ENCODE measurements at regions of chr3 and their contacts with region 1.

Region 1: DNA sequence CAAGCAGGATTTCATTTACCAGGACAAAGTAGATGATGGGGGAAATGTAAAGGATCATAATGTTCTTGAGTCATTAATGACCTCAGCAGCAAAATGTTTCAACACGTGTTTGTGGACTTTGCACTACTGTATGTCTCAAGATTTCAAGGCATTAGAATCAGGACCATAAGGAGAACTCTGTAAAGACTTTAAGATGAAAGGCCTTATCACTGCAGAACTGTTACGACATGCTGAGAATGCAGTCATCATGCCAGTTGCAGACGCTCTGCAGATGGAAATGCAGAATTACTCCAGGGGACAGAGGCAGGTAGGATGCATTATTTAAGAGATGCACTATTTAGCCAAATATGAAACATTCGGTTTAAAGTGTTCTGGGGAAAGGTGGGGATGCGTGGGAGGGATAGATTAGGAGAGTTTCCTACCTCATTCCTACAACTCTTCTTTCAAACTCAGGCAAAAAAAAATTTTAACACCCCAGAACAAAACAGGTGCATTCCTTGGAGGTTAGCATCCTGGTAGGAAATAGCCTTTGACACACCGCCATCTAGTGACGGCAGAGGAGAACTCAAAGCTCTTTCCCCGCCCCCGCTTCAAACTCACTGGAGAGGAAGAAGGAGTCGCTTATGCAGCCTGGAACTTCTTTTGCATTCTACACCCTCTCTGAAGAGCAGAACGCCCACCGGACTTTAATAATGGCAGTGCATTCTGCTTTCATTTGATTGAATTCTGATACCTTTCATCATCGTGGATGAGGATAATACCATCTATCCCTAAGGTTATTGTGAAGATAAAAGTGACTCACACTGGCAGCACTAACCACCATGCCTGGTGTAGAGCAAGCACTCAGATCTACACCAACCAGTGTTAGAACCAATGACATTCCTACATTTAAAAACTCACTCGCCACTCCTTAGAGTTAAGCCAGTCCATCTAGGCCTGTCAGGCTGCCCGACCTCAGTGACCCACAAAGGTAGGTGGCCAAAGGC is 43.1 kb upstream of the TOPAZ1 start:
- DNase-seq: peak; percentile 83
- ATAC-seq: peak; percentile 77
- H3K4me3 Mint-ChIP-seq: no peak overlapping the region
- H3K27ac Mint-ChIP-seq: no peak overlapping the region
- H3K4me1 Mint-ChIP-seq: no peaks in the 10 kb centered on the region
- H3K27me3 Mint-ChIP-seq: peaks cover 15% of the 10 kb centered on the region
- CTCF ChIP-seq: peak; percentile 81

Region 2: GRCh38 chr3:43769471-43770425 is 428.8 kb before region 1 on chr3:
- CTCF ChIA-PET with region 1: interaction called, 13 read pairs
- POLR2A ChIA-PET with region 1: no interaction called
- intact Hi-C with region 1: loop called (anchors 5 kb)
- DNase-seq: peak; percentile 87
- ATAC-seq: peak; percentile 62
- H3K4me3 Mint-ChIP-seq: no peak overlapping the region
- H3K27ac Mint-ChIP-seq: no peak overlapping the region
- H3K4me1 Mint-ChIP-seq: peaks cover 34% of the 10 kb centered on the region
- H3K27me3 Mint-ChIP-seq: peaks cover 6% of the 10 kb centered on the region
- CTCF ChIP-seq: peak; percentile 88

Region 3: GRCh38 chr3:43855674-43856299 is 342.8 kb before region 1 on chr3:
- CTCF ChIA-PET with region 1: interaction called, 11 read pairs
- POLR2A ChIA-PET with region 1: no interaction called
- intact Hi-C with region 1: no loop called
- DNase-seq: peak; percentile 63
- ATAC-seq: peak; percentile 66
- H3K4me3 Mint-ChIP-seq: no peak overlapping the region
- H3K27ac Mint-ChIP-seq: no peak overlapping the region
- H3K4me1 Mint-ChIP-seq: no peaks in the 10 kb centered on the region
- H3K27me3 Mint-ChIP-seq: peaks cover 48% of the 10 kb centered on the region
- CTCF ChIP-seq: peak; percentile 64

Region 4: GRCh38 chr3:44000586-44000985 is 198.0 kb before region 1 on chr3:
- CTCF ChIA-PET with region 1: no interaction called
- POLR2A ChIA-PET with region 1: no interaction called
- intact Hi-C with region 1: loop called (anchors 10 kb)
- DNase-seq: no peak
- ATAC-seq: no peak
- H3K4me3 Mint-ChIP-seq: no peak overlapping the region
- H3K27ac Mint-ChIP-seq: no peak overlapping the region
- H3K4me1 Mint-ChIP-seq: peaks cover 34% of the 10 kb centered on the region
- H3K27me3 Mint-ChIP-seq: peaks cover 67% of the 10 kb centered on the region
- CTCF ChIP-seq: no peak

Region 5: GRCh38 chr3:44186111-44186672 is 12.4 kb before region 1 on chr3:
- CTCF ChIA-PET with region 1: interaction called, 19 read pairs
- POLR2A ChIA-PET with region 1: interaction called, 3 read pairs
- intact Hi-C with region 1: no loop called
- DNase-seq: no peak
- ATAC-seq: no peak
- H3K4me3 Mint-ChIP-seq: no peak overlapping the region
- H3K27ac Mint-ChIP-seq: no peak overlapping the region
- H3K4me1 Mint-ChIP-seq: no peaks in the 10 kb centered on the region
- H3K27me3 Mint-ChIP-seq: peaks cover 25% of the 10 kb centered on the region
- CTCF ChIP-seq: no peak